Naive thymus-derived CD4-positive, alpha-beta T cell (primary cell): ENCODE measurements at regions of chr5 and their contacts with region 1.

Region 1: DNA sequence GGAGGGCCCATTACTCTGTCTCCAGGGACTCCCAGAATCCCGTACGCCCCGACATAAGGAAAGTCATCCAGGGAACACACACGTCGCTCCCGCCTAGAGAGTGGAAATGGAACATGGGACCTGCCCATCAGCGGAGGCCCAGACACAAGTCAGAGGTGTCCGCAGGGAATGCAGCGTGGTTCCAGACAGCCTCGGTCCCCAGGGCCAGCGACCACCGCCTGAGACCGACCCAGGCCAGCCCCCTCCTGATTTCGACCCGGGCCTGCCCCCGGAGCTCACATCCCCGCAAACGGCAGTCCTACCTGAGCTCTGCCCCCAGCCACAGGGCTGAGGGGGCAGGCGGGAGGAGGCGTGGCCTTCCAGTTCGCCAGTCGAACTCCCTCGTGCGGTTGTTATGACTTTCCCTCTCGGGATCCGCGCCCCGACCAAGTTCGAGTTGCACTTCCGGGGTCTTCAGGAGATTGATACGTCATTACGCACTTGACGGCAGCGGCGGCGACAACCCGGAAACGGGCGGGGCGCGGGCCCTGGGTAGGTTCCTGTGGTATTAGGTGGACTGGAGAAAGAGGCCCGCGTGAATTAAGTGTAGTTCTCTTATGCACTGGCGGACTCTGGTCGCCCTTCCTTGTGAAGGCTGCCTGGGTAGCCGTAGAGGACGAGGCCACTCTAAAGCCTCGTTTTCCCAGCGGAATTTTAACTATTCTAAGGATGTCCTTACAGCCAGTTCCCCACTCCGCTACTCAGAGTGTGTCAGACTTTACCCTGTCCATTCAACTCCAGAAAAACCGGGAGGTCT is 370.0 kb upstream of the POU5F2 start:
- DNase-seq: peak; percentile 77 to 93 (median 90)
- ATAC-seq: peak; percentile 96
- H3K4me3 ChIP-seq: peak overlapping the region; percentile 90
- H3K4me3 Mint-ChIP-seq: peak overlapping the region; percentile 88 to 97 (median 95)
- H3K27ac ChIP-seq: peak overlapping the region; percentile 85
- H3K27ac Mint-ChIP-seq: peak overlapping the region; percentile 93 to 97 (median 96)
- H3K4me1 ChIP-seq: peaks cover 8 to 10% of the 10 kb centered on the region in 2 donors
- H3K4me1 Mint-ChIP-seq: peaks cover 21 to 50% (median 47%) of the 10 kb centered on the region in 7 donors
- H3K27me3 ChIP-seq: no peaks in the 10 kb centered on the region
- H3K27me3 Mint-ChIP-seq: peaks cover 0 to 15% (median 14%) of the 10 kb centered on the region in 5 donors

Region 2: DNA sequence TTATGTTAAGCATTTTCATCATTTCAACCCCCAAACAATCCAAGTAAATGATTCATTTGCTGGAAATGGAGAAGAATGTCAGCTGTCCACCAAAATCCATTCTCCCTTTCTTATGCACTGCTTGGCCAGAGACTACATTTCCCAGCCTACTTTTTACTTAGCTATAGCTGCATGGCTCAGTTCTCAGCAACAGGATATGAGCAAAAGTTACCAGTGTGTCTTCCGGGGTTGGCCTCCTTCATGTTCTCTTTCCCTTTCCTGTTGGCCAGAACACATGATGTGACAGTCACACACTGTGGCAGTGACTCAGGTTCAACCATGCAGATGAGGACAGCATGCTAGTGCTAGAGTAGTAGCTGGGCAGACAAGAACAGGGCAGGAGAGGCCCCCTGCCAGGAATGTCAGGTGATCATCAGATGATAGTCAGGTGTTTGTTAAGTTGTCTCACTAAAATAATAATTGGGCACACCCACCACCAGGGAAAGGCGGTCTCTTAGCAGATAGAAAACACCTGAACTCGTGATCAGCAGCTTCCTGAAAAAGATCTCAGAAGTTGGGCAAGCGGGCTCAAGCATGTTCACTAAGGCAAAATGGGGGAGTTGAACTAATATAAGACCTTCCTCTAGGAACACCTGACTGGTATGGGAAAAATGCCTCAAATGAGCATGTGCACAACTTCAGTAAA is 1520.7 kb after region 1 on chr5:
- CTCF ChIA-PET with region 1: no interaction called
- POLR2A ChIA-PET with region 1: no interaction called
- intact Hi-C with region 1: loop called in 1 of 2 experiments (anchors 10 kb)
- DNase-seq: peak; percentile 27 to 86 (median 79)
- ATAC-seq: peak; percentile 98
- H3K4me3 ChIP-seq: peak overlapping the region; percentile 8
- H3K4me3 Mint-ChIP-seq: peak overlapping the region; percentile 21 to 79 (median 69)
- H3K27ac ChIP-seq: peak overlapping the region; percentile 65
- H3K27ac Mint-ChIP-seq: peak overlapping the region; percentile 90 to 99 (median 94)
- H3K4me1 ChIP-seq: peaks cover 6 to 24% of the 10 kb centered on the region in 2 donors
- H3K4me1 Mint-ChIP-seq: peaks cover 15 to 52% (median 35%) of the 10 kb centered on the region in 7 donors
- H3K27me3 ChIP-seq: no peaks in the 10 kb centered on the region
- H3K27me3 Mint-ChIP-seq: peaks cover 0 to 10% (median 0%) of the 10 kb centered on the region in 5 donors